ENCODE measurements at regions of chr1 and their contacts with region 1.

Region 1: GRCh38 chr1:209607102-209607794 is 23.7 kb downstream of the CAMK1G start:
- DNase-seq: peak; percentile 48
- ATAC-seq: peak; percentile 93
- H3K4me3 ChIP-seq: no peak overlapping the region
- H3K27ac ChIP-seq: peak overlapping the region; percentile 45; the same call in 1 of the 2 replicates
- H3K4me1 ChIP-seq: peaks cover 10% of the 10 kb centered on the region
- H3K27me3 ChIP-seq: no peaks in the 10 kb centered on the region
- CTCF ChIP-seq: no peak
- EP300 ChIP-seq: no peak
- POLR2A ChIP-seq: no peak
- RAD21 ChIP-seq: no peak

Region 2: GRCh38 chr1:209769171-209769904 is 162.1 kb after region 1 on chr1:
- CTCF ChIA-PET with region 1: no interaction called
- POLR2A ChIA-PET with region 1: no interaction called
- RAD21 ChIA-PET with region 1: interaction called, 11 read pairs
- SMC1A ChIA-PET with region 1: interaction called, 3 read pairs
- in situ Hi-C with region 1: no loop called
- intact Hi-C with region 1: no loop called
- DNase-seq: peak; percentile 75
- ATAC-seq: peak; percentile 84
- H3K4me3 ChIP-seq: peak overlapping the region; percentile 72
- H3K27ac ChIP-seq: peak overlapping the region; percentile 93
- H3K4me1 ChIP-seq: peaks cover 52% of the 10 kb centered on the region
- H3K27me3 ChIP-seq: no peaks in the 10 kb centered on the region
- CTCF ChIP-seq: no peak
- EP300 ChIP-seq: peak; percentile 73 to 79; a peak in 3 of 4 replicates
- POLR2A ChIP-seq: no peak
- RAD21 ChIP-seq: no peak